Caco-2 (cell line): ENCODE measurements at regions of chr13 and their contacts with region 1.

Region 1: GRCh38 chr13:46134961-46135522 is 30.2 kb upstream of the CPB2 start:
- DNase-seq: peak; percentile 80 to 84
- H3K4me3 ChIP-seq: no peak overlapping the region
- H3K4me3 Mint-ChIP-seq: peak overlapping the region; percentile 50
- H3K27ac Mint-ChIP-seq: peak overlapping the region; percentile 77
- H3K4me1 ChIP-seq: peaks cover 27% of the 10 kb centered on the region
- H3K4me1 Mint-ChIP-seq: peaks cover 35% of the 10 kb centered on the region
- H3K27me3 ChIP-seq: no peaks in the 10 kb centered on the region
- H3K27me3 Mint-ChIP-seq: no peaks in the 10 kb centered on the region
- CTCF ChIP-seq: no peak

Region 2: GRCh38 chr13:46052319-46053161 is 82.5 kb before region 1 on chr13 and contains the start of gene ZC3H13:
- CTCF ChIA-PET with region 1: interaction called, 3 read pairs
- POLR2A ChIA-PET with region 1: no interaction called
- intact Hi-C with region 1: loop called (anchors 1 kb)
- DNase-seq: peak; percentile 94 to 96
- H3K4me3 ChIP-seq: peak within 1 kb of the TSS; percentile 88
- H3K4me3 Mint-ChIP-seq: peak within 1 kb of the TSS; percentile 77
- H3K27ac Mint-ChIP-seq: peak within 1 kb of the TSS; percentile 91
- H3K4me1 ChIP-seq: peaks cover 6% of the 10 kb centered on the region
- H3K4me1 Mint-ChIP-seq: peaks cover 8% of the 10 kb centered on the region
- H3K27me3 ChIP-seq: no peaks in the 10 kb centered on the region
- H3K27me3 Mint-ChIP-seq: peaks cover 9% of the 10 kb centered on the region
- CTCF ChIP-seq: peak; percentile 28 to 45
- total RNA-seq, gene ZC3H13: 45.0 and 47.0 TPM in 2 replicates

Region 3: DNA sequence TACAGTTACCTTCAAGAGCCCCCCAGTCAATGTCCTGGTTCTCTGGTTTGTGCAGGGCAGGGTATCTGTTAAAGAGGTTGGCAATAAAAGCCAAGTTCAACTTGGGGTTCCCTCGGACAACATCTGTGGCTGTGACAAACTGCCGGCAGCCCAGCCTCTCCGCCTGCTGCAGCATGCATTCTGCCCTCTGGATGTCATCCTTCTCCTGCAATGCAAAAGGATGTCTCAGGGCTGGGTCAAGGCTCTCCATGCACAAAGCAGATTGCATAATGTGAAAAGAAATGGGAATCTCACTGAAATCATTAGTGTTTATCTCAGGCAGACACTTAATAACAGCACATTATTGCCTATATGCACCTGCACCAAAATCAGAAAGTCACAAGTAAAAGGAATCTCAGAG is 11.9 kb after region 1 on chr13:
- CTCF ChIA-PET with region 1: no interaction called
- POLR2A ChIA-PET with region 1: no interaction called
- intact Hi-C with region 1: loop called (anchors 1 kb)
- DNase-seq: peak; percentile 58 to 63
- H3K4me3 ChIP-seq: no peak overlapping the region
- H3K4me3 Mint-ChIP-seq: no peak overlapping the region
- H3K27ac Mint-ChIP-seq: no peak overlapping the region
- H3K4me1 ChIP-seq: peaks cover 32% of the 10 kb centered on the region
- H3K4me1 Mint-ChIP-seq: peaks cover 29% of the 10 kb centered on the region
- H3K27me3 ChIP-seq: no peaks in the 10 kb centered on the region
- H3K27me3 Mint-ChIP-seq: no peaks in the 10 kb centered on the region
- CTCF ChIP-seq: peak; percentile 54 to 59